OCI-LY7 (cell line): ENCODE measurements at regions of chr2 and their contacts with region 1.

Region 1: DNA sequence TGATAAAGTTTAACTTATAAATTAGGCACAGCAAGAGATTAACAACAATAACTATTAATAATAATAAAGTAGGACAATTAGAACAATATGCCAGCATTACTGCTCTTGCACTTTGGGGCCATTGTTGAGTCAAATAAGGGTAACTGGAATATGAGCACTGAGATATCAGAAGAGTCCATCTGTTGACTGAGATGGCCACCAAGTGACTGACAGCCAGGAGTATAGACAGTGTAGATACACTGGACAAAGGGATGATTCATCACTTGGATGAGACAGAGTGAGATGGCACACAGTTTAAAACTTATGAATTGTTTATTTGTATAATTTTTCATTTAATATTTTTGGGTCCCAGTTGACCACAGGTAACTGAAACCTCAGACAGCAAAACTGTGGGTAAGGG is 20.0 kb downstream of the NAB1 start:
- DNase-seq: no peak
- H3K4me3 ChIP-seq: no peak overlapping the region
- H3K27ac ChIP-seq: no peak overlapping the region
- H3K4me1 ChIP-seq: no peaks in the 10 kb centered on the region
- CTCF ChIP-seq: no peak

Region 2: GRCh38 chr2:191013932-191014652 is 345.2 kb after region 1 on chr2 and contains the start of gene STAT1:
- CTCF ChIA-PET with region 1: no interaction called
- POLR2A ChIA-PET with region 1: no interaction called
- intact Hi-C with region 1: loop called (anchors 10 kb)
- DNase-seq: peak; percentile 92
- H3K4me3 ChIP-seq: peak within 1 kb of the TSS; percentile 85
- H3K27ac ChIP-seq: peak within 1 kb of the TSS; percentile 19
- H3K4me1 ChIP-seq: peaks cover 14% of the 10 kb centered on the region
- CTCF ChIP-seq: no peak
- total RNA-seq, gene STAT1: 17.2 and 23.1 TPM in 2 replicates